HEK293T (cell line): ENCODE measurements at regions of chr17 and their contacts with region 1.

Region 1: GRCh38 chr17:1648963-1649843 is 463 bp downstream of the RILP start:
- DNase-seq: peak; percentile 96

Region 2: DNA sequence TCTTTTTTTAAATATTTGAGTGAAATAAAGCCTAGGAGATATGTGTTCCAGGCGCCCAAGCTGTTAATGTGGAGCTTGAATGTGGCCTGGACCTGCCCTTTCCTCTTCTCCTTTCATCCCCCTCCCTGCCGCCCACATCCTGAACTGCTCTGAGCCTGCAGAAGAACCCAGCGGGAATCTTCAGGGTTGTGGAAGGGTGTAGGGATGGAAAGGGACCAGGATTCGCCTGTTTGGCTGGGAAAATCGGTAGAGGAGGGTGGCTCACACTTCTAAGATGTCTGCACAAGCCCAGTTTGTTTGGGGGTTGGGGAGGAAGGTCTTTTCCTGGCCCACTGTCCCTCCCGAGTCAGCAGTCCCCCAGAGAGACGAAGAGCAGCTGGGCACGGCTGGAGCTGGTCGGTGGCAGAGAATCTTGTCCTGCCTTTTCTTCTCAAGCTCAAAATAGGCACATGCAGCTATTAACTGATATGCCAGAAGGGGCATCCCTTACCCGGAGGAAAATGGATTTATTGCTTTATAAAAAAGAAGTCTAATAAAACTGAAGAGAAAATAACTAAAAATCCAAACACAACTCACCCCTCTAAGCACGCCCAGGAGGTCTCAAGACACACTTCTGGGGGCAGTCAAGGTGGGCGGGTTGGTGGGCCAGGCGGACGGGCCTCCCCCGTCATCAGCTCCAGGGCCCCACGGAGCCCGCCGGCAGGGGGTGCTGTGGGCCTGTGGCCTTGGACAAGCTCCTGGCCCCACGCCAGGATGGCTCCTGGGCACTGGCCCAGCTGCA is 75.1 kb before region 1 on chr17:
- CTCF ChIA-PET with region 1: interaction called, 13 read pairs
- POLR2A ChIA-PET with region 1: interaction called, 3 read pairs
- DNase-seq: peak; percentile 92

Region 3: GRCh38 chr17:1673041-1673785 is 24.0 kb after region 1 on chr17:
- CTCF ChIA-PET with region 1: interaction called, 12 read pairs
- POLR2A ChIA-PET with region 1: no interaction called
- DNase-seq: no peak

Region 4: GRCh38 chr17:1920948-1921351 is 271.7 kb after region 1 on chr17:
- CTCF ChIA-PET with region 1: interaction called, 10 read pairs
- POLR2A ChIA-PET with region 1: no interaction called
- DNase-seq: no peak